A673 (cell line): ENCODE measurements at regions of chr10 and their contacts with region 1.

Region 1: DNA sequence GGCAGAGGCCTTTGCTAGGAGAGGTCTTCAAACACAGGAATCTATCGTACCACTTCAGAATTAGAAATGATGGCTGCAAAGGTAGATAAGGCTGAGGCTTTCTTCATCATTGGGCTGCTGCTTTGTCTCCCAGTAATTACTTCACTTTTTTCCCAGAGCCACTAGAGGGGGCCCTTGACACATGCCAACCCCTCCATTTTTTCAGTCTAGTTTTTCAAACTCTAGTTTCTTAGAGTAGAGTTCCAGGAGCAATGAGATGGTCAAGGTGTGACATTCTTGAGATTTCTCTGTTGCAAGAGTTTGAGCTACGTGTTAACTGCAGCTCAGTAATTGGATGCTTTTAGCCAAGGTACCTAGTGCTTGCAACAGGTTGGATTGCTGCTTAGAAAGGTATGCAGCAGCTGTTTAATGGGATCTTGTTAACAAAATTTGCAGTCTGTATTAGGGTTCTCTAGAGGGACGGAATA is 33.8 kb upstream of the RBM20 start:
- DNase-seq: peak; percentile 78
- H3K4me3 ChIP-seq: no peak overlapping the region
- H3K27ac ChIP-seq: no peak overlapping the region
- H3K4me1 ChIP-seq: peaks cover 15% of the 10 kb centered on the region
- H3K27me3 ChIP-seq: no peaks in the 10 kb centered on the region
- CTCF ChIP-seq: peak; percentile 88

Region 2: GRCh38 chr10:110681023-110681681 is 70.8 kb after region 1 on chr10:
- CTCF ChIA-PET with region 1: interaction called, 4 read pairs
- POLR2A ChIA-PET with region 1: no interaction called
- intact Hi-C with region 1: loop called (anchors 1 kb)
- DNase-seq: peak; percentile 77
- H3K4me3 ChIP-seq: no peak overlapping the region
- H3K27ac ChIP-seq: no peak overlapping the region
- H3K4me1 ChIP-seq: peaks cover 2% of the 10 kb centered on the region
- H3K27me3 ChIP-seq: no peaks in the 10 kb centered on the region
- CTCF ChIP-seq: peak; percentile 84

Region 3: GRCh38 chr10:110893559-110894179 is 283.3 kb after region 1 on chr10:
- CTCF ChIA-PET with region 1: no interaction called
- POLR2A ChIA-PET with region 1: no interaction called
- intact Hi-C with region 1: loop called (anchors 2 kb)
- DNase-seq: peak; percentile 76
- H3K4me3 ChIP-seq: no peak overlapping the region
- H3K27ac ChIP-seq: no peak overlapping the region
- H3K4me1 ChIP-seq: peaks cover 4% of the 10 kb centered on the region
- H3K27me3 ChIP-seq: no peaks in the 10 kb centered on the region
- CTCF ChIP-seq: peak; percentile 67